Activated T-helper 2 cell treated with anti-CD3 and anti-CD28 coated beads, Interferon-gamma antibody, Interleukin-2, Interleukin-4, amounts not matched to agents 10 μg/mL and 5 μg/mL and 100 μg/mL, durations not matched to agents 14 hours and 24 hours and 36 hours (primary cell): ENCODE measurements at regions of chr5 and their contacts with region 1.

Region 1: DNA sequence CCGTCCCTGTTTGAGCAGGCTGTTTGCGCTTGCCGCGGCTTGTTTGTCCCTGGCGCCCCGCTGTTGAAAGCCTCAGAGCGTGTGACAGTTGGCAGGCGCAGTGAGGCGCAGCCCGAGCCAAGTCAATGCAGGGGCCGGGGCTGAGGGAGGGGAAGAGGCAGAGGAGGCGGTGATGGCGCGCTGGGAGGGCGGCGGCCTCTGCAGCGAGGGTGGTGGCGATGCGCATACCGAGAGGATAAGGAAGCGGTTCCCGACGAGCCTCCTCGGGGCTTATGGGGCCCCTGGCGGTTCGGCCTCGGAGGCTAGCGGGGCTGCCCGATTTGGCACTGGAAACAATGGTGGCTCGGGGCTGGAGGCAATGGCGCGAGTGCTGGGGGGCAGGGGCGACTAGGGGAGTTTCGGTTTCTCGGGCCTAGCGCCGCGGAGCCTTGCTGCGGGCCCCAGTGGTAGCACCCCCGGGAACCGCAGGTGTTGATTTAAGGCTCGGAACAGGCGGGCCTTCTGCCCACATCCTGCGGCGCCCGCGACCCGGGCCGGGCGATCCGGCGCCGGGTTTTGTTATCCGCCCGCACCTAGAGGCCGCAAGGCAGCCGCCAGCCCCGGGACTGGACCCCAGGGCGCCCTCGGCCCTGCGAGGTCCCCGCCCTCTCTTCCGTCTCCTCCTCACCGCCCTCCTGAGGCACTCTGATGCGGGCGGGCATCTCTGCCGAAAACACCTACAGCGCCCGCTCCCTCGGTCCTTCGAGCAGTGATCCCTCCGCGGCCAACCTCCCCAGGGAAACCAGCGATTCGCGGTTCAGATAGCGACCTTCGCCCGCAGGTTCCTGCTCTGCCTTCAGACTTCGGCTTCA is 947 bp upstream of the LNPEP start:
- DNase-seq: peak; percentile 96
- H3K4me3 Mint-ChIP-seq: peak overlapping the region; percentile 88
- H3K27ac Mint-ChIP-seq: peak overlapping the region; percentile 99
- H3K4me1 Mint-ChIP-seq: peaks cover 58% of the 10 kb centered on the region
- H3K27me3 Mint-ChIP-seq: no peaks in the 10 kb centered on the region

Region 2: GRCh38 chr5:96662725-96663513 is 272.0 kb before region 1 on chr5:
- intact Hi-C with region 1: loop called (anchors 1 kb)
- DNase-seq: peak; percentile 82
- H3K4me3 Mint-ChIP-seq: peak overlapping the region; percentile 90
- H3K27ac Mint-ChIP-seq: peak overlapping the region; percentile 96
- H3K4me1 Mint-ChIP-seq: peaks cover 55% of the 10 kb centered on the region
- H3K27me3 Mint-ChIP-seq: peaks cover 26% of the 10 kb centered on the region

Region 3: DNA sequence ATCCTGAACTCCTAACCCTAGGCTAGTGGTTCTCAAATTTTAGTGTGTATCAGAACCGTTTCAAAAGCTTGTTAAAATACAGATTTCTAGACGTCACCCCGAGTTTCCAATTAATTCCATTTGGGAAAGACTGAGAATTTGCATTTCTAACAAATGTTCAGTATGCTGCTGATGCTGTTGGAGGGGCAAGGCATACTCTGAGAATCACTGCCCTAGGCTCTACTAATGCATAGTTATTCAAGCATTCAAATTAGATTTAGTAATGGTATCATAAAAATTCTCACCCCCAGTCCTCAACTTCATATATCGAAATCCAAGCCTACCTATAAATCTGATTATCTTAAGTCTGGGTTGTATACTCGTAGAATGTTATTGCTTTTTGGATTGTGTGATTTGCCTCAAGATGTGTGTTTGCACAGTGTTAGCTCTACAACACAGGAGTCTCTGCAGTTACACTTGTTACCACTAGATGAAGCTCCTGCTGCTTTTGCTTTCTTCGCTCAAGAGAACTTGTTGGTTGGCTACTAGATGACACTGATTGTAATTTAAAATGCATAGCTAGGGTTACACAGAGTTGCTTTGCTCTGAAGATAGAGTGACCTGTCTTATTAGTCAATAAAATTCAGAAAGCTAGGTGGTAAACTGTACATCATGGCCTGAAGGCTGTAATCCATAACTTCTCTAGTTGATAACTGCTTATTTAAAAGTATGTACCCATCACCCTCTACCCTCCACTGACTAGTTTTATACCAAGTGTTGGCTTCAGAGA is 66.1 kb before region 1 on chr5:
- intact Hi-C with region 1: loop called (anchors 1 kb)
- DNase-seq: no peak
- H3K4me3 Mint-ChIP-seq: no peak overlapping the region
- H3K27ac Mint-ChIP-seq: no peak overlapping the region
- H3K4me1 Mint-ChIP-seq: peaks cover 54% of the 10 kb centered on the region
- H3K27me3 Mint-ChIP-seq: no peaks in the 10 kb centered on the region

Region 4: DNA sequence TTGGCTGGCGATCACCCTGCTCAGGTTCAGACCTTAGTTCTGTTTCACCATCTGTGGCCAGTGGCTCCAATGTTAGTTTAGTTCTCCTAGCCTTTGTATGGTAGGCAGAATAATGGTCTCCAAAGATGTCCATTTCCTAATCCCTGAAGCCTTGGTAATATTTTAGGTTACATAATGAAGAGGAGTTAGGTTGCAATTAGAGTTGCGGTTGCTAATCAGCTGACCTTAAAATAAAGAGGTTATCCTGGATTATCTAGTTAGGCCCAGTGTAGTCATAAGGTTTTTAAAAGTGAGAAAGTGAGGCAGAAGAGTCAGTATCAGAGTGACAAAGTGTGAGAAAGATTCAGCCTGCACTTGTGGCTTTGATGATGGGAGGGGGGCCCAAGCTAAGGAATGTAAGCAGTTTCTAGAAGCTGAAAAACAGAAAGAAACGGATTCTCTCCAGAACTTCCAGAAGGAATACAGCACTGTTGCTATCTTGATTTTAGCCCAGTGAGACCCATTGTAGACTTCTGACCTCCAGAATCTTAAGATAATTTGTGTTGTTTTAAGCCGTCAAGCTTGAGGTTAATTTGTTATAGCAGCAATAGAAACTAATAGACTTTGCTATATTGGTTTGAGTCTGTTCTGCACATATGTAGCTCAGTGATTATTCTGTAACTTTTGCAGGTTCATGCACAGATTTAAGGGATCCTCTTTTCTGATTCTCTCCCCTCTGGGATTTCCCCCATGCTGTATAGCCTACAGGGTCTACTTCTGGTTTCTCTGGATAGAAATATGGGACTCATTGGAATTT is 22.5 kb after region 1 on chr5:
- intact Hi-C with region 1: loop called (anchors 1 kb)
- DNase-seq: no peak
- H3K4me3 Mint-ChIP-seq: peak overlapping the region; percentile 31
- H3K27ac Mint-ChIP-seq: peak overlapping the region; percentile 82
- H3K4me1 Mint-ChIP-seq: peaks cover 63% of the 10 kb centered on the region
- H3K27me3 Mint-ChIP-seq: no peaks in the 10 kb centered on the region

Region 5: DNA sequence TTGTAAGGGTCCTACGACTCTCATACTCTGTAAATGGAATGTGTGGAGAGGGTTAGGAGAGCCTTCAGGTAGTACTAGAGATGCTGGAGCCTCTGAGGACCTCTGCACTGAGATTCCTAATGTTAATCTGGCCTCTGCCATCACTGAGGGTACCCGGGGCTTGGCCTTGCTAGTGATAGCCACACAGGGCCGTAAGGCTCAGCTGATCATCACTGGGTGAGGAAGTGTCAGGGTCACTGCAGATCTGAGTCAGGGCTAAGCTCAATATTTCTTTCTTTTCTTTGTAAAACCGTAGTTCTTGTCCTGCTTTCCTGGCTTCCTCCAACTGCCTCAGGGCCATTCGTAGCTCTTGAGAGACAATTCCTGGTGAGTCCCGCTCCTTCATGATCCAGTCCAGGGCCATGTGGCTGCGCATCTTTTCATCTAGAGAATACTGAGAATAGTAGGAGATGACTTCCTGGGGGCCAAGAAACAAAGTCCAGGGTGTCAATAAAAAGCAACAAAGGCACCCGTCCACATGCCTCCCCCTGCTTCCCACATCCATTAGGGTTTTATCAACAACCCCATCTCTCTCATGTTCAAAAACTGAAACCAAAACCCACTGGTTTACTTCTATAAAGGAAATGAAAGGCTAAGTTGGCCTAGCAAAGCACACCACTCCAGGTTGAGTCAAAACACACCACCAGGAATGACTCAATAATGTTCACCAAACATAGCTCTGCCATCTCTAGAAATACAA is 159.8 kb after region 1 on chr5:
- intact Hi-C with region 1: loop called (anchors 2 kb)
- DNase-seq: peak; percentile 41
- H3K4me3 Mint-ChIP-seq: no peak overlapping the region
- H3K27ac Mint-ChIP-seq: peak overlapping the region; percentile 56
- H3K4me1 Mint-ChIP-seq: peaks cover 22% of the 10 kb centered on the region
- H3K27me3 Mint-ChIP-seq: peaks cover 37% of the 10 kb centered on the region

Region 6: DNA sequence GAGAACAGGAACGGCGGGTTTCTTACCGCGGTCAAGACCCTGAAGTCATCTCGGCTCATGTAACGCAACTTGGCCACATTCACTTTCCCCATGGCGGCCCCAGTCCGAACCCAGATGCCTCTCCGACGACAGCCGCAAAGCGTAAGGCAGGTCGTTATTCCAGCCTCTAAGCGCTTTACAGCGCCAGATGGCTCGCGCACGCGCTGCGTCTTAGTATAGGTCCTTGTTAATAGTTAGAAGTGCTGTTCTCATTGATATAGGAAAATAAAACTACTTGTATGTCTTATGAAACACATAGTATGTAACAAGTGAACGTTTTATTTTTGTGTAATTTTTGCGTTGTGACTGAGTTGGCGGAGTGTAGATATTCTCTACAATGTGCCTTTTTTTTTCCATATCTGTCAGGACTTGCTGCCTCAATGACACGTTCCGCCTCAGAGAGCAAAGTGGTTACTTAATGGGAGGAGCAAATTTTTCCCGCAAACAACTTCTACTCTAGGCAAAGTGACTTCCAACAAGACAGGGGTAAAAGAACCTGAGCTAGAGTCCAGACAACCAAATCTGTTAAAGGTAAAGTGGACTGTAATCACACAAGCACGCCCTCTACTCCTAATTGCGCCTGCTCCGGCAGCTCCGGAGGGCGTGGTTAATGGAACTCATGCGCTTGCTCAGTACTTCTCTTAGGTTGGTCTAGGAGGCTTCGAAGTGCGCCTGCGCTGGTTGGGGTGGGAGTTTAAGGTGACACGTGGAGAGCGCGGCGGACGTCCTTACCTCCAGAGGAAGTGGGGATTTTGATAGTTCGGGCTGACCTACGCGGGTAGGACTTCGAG is 248.4 kb after region 1 on chr5 and contains the start of gene RIOK2:
- intact Hi-C with region 1: loop called (anchors 1 kb)
- DNase-seq: peak; percentile 89
- H3K4me3 Mint-ChIP-seq: peak within 1 kb of the TSS; percentile 89
- H3K27ac Mint-ChIP-seq: peak within 1 kb of the TSS; percentile 100
- H3K4me1 Mint-ChIP-seq: peaks cover 24% of the 10 kb centered on the region
- H3K27me3 Mint-ChIP-seq: peaks cover 9% of the 10 kb centered on the region
- total RNA-seq, gene RIOK2: 28.1 and 30.5 TPM in 2 replicates